ENCODE measurements at regions of chr16 and their contacts with region 1.

Region 1: GRCh38 chr16:75224306-75225091 is 5.7 kb downstream of the CTRB1 start:
- DNase-seq: no peak
- ATAC-seq: no peak

Region 2: DNA sequence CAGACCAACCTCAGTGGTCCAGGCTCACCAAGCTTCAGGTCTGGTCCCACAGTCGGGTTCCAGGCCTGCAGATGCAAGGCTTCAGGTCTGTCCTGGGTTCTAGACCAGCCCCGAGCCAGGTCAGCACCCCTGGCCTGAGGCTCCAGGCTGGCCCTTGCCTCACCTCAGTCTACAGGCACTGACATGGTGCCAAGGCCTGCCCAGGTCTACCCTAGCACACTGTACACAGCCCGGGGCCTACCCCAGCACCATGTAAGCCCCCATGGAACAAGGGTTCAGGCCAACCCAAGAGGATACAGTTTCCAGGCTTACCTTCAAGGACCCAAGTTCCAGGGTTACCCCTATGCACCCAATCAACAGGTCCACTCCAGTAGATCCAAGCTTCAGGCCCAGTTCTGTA is 49.4 kb before region 1 on chr16:
- intact Hi-C with region 1: no loop called
- DNase-seq: no peak
- ATAC-seq: no peak

Region 3: DNA sequence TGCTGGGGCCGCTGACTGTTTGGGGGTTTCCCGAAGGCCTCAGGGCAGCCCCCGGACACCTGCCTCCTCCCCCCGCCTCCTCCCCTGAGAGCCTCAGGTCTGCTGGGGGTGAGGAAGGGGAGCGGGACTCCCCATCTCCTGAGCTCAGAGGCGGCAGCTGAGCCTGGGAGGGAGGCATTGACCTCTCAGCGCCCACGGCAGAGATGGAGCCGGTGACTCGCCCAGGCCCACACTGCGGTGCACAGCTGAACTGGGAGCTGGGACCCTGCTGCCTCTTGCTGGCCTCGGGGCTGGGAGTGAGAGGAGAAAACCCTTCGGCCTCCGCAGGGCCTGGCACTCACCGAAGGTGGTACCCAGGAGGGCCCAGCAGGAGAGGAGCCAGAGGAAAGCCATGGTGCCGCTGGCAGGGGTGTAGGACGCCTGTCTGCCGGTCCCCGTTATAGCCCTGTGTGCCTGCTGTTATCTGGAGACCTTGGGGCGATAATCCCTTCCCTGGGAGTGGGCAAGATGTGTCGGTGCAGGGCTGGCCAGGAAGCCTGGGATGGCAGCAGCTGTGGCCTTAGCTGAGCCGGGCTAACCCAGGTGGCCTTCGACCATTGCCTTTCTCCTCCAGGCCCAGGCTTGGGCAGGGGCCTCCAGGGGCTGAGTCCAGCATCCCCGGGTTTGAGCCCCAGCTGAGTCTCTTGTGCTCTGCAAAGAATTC is 17.6 kb before region 1 on chr16 and contains the start of gene CTRB2:
- intact Hi-C with region 1: loop called (anchors 2 kb)
- DNase-seq: no peak
- ATAC-seq: no peak
- total RNA-seq, gene CTRB2: not detected

Measured in Right ventricle myocardium superior (tissue), 1 donor.